ENCODE measurements at regions of chr12 and their contacts with region 1.

Region 1: DNA sequence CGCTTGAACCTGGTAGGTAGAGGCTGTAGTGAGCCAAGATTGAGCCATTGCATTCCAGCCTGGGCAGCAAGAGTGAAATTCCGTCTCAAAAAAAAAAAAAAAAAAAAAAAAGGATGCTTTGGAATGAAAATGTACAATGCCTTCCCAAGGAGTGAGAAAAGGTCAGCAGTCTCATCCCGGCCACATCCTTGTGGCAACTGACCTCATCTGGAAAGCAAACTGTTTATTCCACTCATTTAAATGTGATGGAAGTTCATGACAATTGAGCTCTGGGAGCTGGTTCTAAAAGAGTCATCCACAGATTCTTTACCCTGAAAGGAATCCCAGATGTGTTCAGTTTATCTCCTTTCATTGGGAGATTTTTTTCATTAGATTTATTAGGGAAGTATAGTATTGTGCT is 19.4 kb upstream of the LIMA1 start:
- DNase-seq: no peak
- H3K4me3 ChIP-seq: no peak overlapping the region
- H3K27ac ChIP-seq: no peak overlapping the region
- H3K27me3 ChIP-seq: no peaks in the 10 kb centered on the region
- CTCF ChIP-seq: no peak

Region 2: GRCh38 chr12:50249464-50250251 is 53.0 kb before region 1 on chr12:
- CTCF ChIA-PET with region 1: no interaction called
- POLR2A ChIA-PET with region 1: no interaction called
- DNase-seq: no peak
- H3K4me3 ChIP-seq: no peak overlapping the region
- H3K27ac ChIP-seq: no peak overlapping the region
- H3K27me3 ChIP-seq: no peaks in the 10 kb centered on the region
- CTCF ChIP-seq: no peak

Region 3: GRCh38 chr12:50440288-50440687 is 137.6 kb after region 1 on chr12:
- CTCF ChIA-PET with region 1: interaction called, 3 read pairs
- POLR2A ChIA-PET with region 1: interaction called, 11 read pairs
- DNase-seq: no peak
- H3K4me3 ChIP-seq: no peak overlapping the region
- H3K27ac ChIP-seq: no peak overlapping the region
- H3K27me3 ChIP-seq: no peaks in the 10 kb centered on the region
- CTCF ChIP-seq: no peak

Measured in AG04450 (cell line).